K562 (cell line): ENCODE measurements at regions of chr10 and their contacts with region 1.

Region 1: DNA sequence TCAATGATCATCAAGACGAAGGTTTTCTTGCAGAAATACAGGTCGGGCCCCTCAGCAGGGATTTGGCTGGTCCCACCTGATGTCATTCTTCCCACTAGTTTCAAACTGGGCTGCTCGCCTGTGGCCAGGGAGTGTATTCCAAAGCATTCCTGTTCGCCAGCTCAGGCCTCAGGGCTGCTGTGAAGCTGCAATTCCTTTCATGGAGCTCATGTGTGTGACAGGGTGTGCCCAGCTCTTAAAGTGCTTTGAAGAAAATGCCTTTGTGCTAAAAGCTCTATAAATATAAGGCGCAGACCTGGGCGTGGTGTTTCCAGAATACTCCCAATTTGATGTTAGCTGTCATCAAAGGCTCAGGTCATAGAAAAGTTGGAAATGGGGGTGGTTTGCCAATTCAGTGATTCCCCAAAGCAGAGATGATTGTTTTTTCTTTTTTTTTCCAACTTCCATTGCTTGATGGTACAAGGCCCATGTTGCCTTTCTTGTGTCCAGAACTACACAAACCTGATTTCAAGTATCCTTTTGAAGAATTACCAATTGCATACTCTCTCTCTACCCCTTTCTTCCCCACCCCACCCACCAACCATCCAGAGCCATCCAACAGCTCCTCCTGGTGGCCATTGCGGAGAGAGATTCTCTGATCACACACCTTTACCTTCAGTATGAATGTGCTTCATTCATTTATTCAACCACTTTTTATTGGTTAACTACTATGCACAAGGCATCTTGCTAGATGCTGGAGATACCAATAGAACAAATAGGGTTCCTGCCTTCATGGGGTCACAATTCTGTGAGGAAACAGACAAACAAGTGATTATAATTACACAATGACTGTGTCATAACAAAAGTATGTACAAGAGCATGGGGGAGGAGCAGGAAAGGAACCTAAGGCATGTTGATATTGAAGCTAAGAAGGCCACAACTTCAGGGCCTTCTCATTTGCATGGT is 297.3 kb upstream of the LYZL1 start:
- DNase-seq: peak; percentile 62 to 79 (median 71)
- ATAC-seq: peak; percentile 96
- H3K4me3 ChIP-seq: no peak overlapping the region
- H3K27ac ChIP-seq: no peak overlapping the region
- H3K4me1 ChIP-seq: peaks cover 0 to 4% of the 10 kb centered on the region in 2 experiments; a peak in 4 of 5 replicates
- H3K27me3 ChIP-seq: peaks cover 2 to 8% of the 10 kb centered on the region in 2 experiments; a peak in 1 of 5 replicates
- CTCF ChIP-seq: peak; percentile 90 to 93 (median 90)
- EP300 ChIP-seq: no peak
- POLR2A ChIP-seq: no peak
- RAD21 ChIP-seq: peak; percentile 97 to 99

Region 2: GRCh38 chr10:28875549-28876081 is 116.0 kb before region 1 on chr10:
- CTCF ChIA-PET with region 1: interaction called, 4 read pairs
- POLR2A ChIA-PET with region 1: no interaction called
- in situ Hi-C with region 1: no loop called
- intact Hi-C with region 1: loop called (anchors 2 kb)
- DNase-seq: no peak
- ATAC-seq: no peak
- H3K4me3 ChIP-seq: no peak overlapping the region
- H3K27ac ChIP-seq: no peak overlapping the region
- H3K4me1 ChIP-seq: peaks cover 0 to 3% of the 10 kb centered on the region in 2 experiments; a peak in 1 of 5 replicates
- H3K27me3 ChIP-seq: no peaks in the 10 kb centered on the region
- CTCF ChIP-seq: no peak
- EP300 ChIP-seq: no peak
- POLR2A ChIP-seq: no peak
- RAD21 ChIP-seq: no peak

Region 3: DNA sequence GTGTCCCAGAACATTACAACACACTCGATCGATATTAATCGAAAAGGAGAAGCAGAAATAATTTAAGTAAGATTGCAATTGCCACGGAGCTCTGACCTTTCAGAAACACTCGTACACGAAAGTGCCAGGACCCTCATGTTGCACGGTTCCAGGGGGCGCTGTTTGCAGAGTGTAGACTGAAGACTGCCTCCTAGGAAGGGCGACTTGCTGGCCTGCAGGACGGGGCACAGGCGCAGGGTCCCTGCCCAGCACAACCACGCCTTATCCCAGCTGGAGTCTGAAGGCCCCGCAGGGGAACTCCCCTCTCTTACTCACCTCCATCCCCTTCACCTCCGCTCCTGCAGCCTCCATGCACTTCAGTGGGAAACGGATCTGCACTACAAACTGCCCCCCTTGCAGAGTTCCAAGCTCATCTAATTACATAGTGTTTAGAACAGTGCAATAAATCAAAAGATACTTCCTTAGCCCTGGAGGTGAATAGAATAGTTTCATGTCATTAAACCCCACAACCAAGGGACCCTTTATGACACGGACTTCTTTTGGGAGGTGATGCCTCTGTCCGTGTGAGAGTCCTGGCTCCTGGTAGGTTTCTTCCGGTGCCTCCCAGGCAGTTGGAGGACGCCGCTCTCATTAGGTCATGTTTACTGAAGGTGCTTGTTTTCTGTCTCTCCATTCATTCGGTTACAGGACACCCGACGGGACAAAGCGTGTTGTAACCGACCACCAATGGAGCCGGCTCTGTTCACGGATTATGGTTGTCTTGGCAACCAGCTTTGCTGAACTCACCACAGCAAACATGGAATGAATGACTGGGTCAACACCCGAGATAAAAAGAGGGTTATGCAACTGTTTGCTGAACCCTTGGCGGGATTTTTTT is 52.1 kb before region 1 on chr10:
- CTCF ChIA-PET with region 1: no interaction called
- POLR2A ChIA-PET with region 1: interaction called, 4 read pairs
- in situ Hi-C with region 1: no loop called
- intact Hi-C with region 1: loop called (anchors 1 kb)
- DNase-seq: peak; percentile 33 to 82 (median 50)
- ATAC-seq: peak; percentile 94
- H3K4me3 ChIP-seq: peak overlapping the region; percentile 18
- H3K27ac ChIP-seq: peak overlapping the region; percentile 32; the same call in 2 of the 3 replicates
- H3K4me1 ChIP-seq: peaks cover 0 to 3% of the 10 kb centered on the region in 2 experiments; a peak in 2 of 5 replicates
- H3K27me3 ChIP-seq: no peaks in the 10 kb centered on the region
- CTCF ChIP-seq: peak; percentile 69 to 92 (median 83)
- EP300 ChIP-seq: peak; percentile 48
- POLR2A ChIP-seq: no peak
- RAD21 ChIP-seq: peak; percentile 18 to 63; a peak in 2 of 4 replicates

Region 4: GRCh38 chr10:29304264-29305030 is 312.8 kb after region 1 on chr10:
- CTCF ChIA-PET with region 1: no interaction called
- POLR2A ChIA-PET with region 1: no interaction called
- in situ Hi-C with region 1: no loop called
- intact Hi-C with region 1: loop called (anchors 10 kb)
- DNase-seq: peak; percentile 63 to 67 (median 65)
- ATAC-seq: peak; percentile 80
- H3K4me3 ChIP-seq: no peak overlapping the region
- H3K27ac ChIP-seq: no peak overlapping the region
- H3K4me1 ChIP-seq: no peaks in the 10 kb centered on the region
- H3K27me3 ChIP-seq: peaks cover 8 to 18% of the 10 kb centered on the region in 2 experiments; a peak in 4 of 5 replicates
- CTCF ChIP-seq: peak; percentile 66 to 78 (median 76)
- EP300 ChIP-seq: no peak
- POLR2A ChIP-seq: no peak
- RAD21 ChIP-seq: peak; percentile 95

Region 5: GRCh38 chr10:29392376-29393021 is 400.9 kb after region 1 on chr10:
- CTCF ChIA-PET with region 1: no interaction called
- POLR2A ChIA-PET with region 1: no interaction called
- in situ Hi-C with region 1: no loop called
- intact Hi-C with region 1: no loop called
- DNase-seq: peak; percentile 52 to 59 (median 56)
- ATAC-seq: peak; percentile 84
- H3K4me3 ChIP-seq: no peak overlapping the region
- H3K27ac ChIP-seq: no peak overlapping the region
- H3K4me1 ChIP-seq: no peaks in the 10 kb centered on the region
- H3K27me3 ChIP-seq: peaks cover 20 to 43% of the 10 kb centered on the region in 2 experiments; a peak in 3 of 5 replicates
- CTCF ChIP-seq: peak; percentile 66 to 75 (median 73)
- EP300 ChIP-seq: no peak
- POLR2A ChIP-seq: no peak
- RAD21 ChIP-seq: peak; percentile 18 to 58; a peak in 3 of 4 replicates